Activated CD8-positive, alpha-beta memory T cell treated with anti-CD3 and anti-CD28 coated beads, Interleukin-2, amount 10 ng/mL, durations not matched to agents 7 days and 5 days (primary cell): ENCODE measurements at regions of chr18 and their contacts with region 1.

Region 1: DNA sequence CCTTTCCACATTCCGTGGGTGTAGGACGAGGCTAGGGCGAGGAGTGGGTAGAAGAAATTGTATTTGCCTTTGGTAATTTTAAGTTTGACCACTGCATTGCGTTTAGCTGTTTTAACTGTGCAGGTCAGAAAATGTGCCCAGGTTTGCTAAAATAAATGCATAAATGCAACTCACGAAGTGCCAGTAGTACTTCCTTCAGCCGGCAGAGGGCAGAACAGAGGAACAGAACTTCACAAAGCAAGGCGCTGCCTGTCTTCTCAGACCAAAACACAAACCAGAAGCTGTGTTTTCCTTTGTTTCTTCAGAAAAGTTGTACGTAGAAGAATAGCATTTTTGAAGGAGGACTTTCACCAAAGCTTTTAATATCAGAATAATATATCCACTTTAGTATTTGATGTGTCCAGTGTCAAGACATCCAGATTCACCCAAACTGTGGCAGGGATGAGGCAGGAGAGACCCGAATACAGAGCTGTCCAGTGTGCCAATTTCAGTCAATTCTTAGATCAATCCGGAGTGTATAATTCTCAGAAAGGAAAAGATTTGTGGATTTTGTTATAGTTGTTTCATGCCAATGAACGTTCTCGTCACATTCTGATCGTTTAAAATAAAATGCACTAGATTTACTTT is 348.6 kb downstream of the DLGAP1 start:
- DNase-seq: peak; percentile 69
- ATAC-seq: peak; percentile 55
- H3K4me3 Mint-ChIP-seq: no peak overlapping the region
- H3K27ac Mint-ChIP-seq: no peak overlapping the region
- H3K4me1 Mint-ChIP-seq: no peaks in the 10 kb centered on the region
- H3K27me3 Mint-ChIP-seq: peaks cover 3% of the 10 kb centered on the region

Region 2: GRCh38 chr18:4096486-4096885 is 10.0 kb before region 1 on chr18:
- CTCF ChIA-PET with region 1: no interaction called
- DNase-seq: no peak
- ATAC-seq: no peak
- H3K4me3 Mint-ChIP-seq: no peak overlapping the region
- H3K27ac Mint-ChIP-seq: no peak overlapping the region
- H3K4me1 Mint-ChIP-seq: peaks cover 12% of the 10 kb centered on the region
- H3K27me3 Mint-ChIP-seq: peaks cover 3% of the 10 kb centered on the region

Region 3: DNA sequence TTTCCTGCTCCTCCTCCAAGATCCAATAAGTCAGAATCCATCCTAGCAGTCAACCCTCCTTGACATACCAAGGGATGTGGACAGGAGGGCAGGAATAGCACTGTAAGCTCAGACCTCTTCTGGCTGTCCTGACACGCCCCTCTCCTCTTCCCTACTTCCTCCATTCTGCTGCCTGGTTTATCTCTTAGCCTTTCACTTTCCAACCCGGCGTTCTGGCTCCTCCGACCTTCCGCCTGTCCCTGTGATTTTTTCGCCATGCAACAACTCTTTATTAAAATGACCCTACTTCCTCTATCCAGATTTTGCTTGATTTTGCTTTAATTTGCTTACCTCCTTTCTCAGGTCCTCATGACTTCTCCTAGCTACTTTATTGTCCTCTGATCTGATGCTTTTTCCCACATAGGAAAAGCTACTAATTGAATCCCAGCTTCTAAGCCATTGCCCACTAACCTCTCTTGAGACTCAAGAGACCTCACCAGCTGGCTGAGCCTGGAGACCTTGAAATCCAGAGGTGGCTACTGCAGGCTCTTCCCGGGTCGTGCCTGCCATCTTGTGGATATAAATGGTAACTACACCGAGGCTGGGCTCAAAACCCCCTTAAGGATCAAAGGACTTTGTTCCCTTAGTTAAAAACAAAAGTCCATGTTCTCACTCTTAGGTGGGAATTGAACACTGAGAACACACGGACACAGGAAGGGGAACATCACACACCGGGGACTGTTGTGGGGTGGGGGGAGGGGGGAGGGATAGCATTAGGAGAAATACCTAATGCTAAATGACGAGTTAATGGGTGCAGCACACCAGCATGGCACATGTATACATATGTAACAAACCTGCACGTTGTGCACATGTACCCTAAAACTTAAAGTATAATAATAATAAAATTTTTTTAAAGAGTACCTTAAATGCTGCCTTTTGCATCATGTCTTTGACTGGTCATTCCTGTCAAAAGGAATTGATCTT is 951.1 kb after region 1 on chr18:
- CTCF ChIA-PET with region 1: interaction called, 28 read pairs
- DNase-seq: peak; percentile 56
- ATAC-seq: peak; percentile 55
- H3K4me3 Mint-ChIP-seq: no peak overlapping the region
- H3K27ac Mint-ChIP-seq: no peak overlapping the region
- H3K4me1 Mint-ChIP-seq: peaks cover 8% of the 10 kb centered on the region
- H3K27me3 Mint-ChIP-seq: peaks cover 4% of the 10 kb centered on the region